Heart right ventricle (tissue), 16 donors: ENCODE measurements at regions of chr11 and their contacts with region 1.

Region 1: DNA sequence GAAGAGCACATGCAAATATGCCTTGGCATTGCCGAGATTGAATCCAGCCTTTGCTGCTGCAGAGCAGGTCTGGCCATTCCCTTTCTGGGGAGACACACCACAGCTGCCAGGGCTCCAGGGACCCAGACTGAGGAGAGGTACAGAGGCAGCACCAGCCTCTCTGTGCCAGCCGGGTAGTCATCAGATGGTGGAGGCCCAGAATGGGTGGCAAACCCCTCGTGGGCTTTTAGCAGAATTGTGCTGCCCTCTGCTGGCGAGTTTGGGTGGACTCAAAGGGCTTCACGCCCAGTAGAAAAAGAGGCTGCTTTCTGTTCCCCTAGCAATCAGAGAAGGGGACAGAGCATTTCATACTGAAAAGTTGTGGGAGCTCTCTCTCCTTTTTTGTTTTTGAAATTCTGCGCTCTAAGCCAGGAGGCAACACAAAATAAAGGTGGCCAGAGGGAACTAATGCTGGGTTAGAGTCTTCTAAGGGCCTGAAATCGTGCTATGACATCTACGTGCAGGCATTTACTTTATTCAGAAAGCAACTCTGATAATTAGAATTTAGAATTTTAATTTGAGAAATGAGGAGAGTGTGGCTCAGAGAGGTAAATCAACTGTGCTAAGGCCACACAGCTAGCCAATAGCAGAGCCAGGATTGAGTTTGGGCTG is 158.8 kb upstream of the NAV2 start:
- DNase-seq: peak; percentile 78 to 81
- ATAC-seq: peak; percentile 55 to 86 (median 82)
- H3K4me3 ChIP-seq: no peak overlapping the region
- H3K27ac ChIP-seq: no peak overlapping the region
- H3K4me1 ChIP-seq: peaks cover 0 to 14% (median 0%) of the 10 kb centered on the region in 9 donors
- H3K27me3 ChIP-seq: no peaks in the 10 kb centered on the region
- CTCF ChIP-seq: peak; percentile 71 to 95 (median 92)

Region 2: GRCh38 chr11:19071255-19071654 is 482.6 kb before region 1 on chr11:
- intact Hi-C with region 1: loop called (anchors 1 to 5 kb)
- DNase-seq: peak; percentile 57 to 59
- ATAC-seq: peak; percentile 76 to 95 (median 88)
- H3K4me3 ChIP-seq: peak overlapping the region in 3 of 10 donors; percentile 13 to 29 (median 22)
- H3K27ac ChIP-seq: no peak overlapping the region
- H3K4me1 ChIP-seq: peaks cover 0 to 3% (median 0%) of the 10 kb centered on the region in 9 donors
- H3K27me3 ChIP-seq: peaks cover 0 to 17% (median 0%) of the 10 kb centered on the region in 7 donors
- CTCF ChIP-seq: peak; percentile 74 to 96 (median 90)

Region 3: GRCh38 chr11:19259487-19260345 is 294.1 kb before region 1 on chr11:
- intact Hi-C with region 1: loop called in 9 of 10 experiments (anchors 2 to 10 kb)
- DNase-seq: peak; percentile 57 to 70
- ATAC-seq: peak in 7 of 8 donors; percentile 38 to 76 (median 71)
- H3K4me3 ChIP-seq: peak overlapping the region in 4 of 10 donors; percentile 10 to 34 (median 22)
- H3K27ac ChIP-seq: no peak overlapping the region
- H3K4me1 ChIP-seq: peaks cover 0 to 3% (median 0%) of the 10 kb centered on the region in 9 donors
- H3K27me3 ChIP-seq: no peaks in the 10 kb centered on the region
- CTCF ChIP-seq: peak; percentile 82 to 98 (median 94)

Region 4: GRCh38 chr11:19326499-19326898 is 227.3 kb before region 1 on chr11:
- intact Hi-C with region 1: loop called in 3 of 10 experiments (anchors 5 kb)
- DNase-seq: no peak
- ATAC-seq: peak in 1 of 8 donors; percentile 19
- H3K4me3 ChIP-seq: no peak overlapping the region
- H3K27ac ChIP-seq: no peak overlapping the region
- H3K4me1 ChIP-seq: no peaks in the 10 kb centered on the region
- H3K27me3 ChIP-seq: peaks cover 0 to 6% (median 3%) of the 10 kb centered on the region in 7 donors
- CTCF ChIP-seq: peak in 7 of 9 donors; percentile 21 to 41 (median 32)

Region 5: DNA sequence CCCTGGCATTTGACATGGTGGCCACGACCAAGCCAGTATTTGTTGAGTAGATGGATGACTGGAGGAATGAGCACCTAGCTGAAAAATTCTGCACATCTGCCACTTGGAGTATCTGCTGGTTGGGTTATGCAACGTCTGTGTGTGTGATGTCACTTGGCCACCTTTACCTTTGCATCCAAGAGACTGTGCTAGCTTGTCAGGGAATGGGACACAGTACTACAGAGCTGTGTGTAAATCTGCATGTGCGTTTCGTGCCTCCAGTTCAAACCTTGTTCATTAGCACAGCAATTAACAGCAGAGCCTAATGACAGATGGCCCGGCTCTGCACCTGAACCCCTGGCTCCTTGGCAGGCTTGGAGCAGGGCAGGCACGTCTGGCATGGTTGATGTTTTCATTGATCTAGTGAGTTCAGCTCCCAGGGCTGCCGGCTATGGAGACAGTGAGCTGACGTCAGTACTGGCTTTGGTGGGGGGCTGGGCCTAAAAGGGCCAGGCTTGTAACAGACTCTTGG is 29.6 kb before region 1 on chr11:
- intact Hi-C with region 1: no loop called
- DNase-seq: no peak
- ATAC-seq: peak in 1 of 8 donors; percentile 19
- H3K4me3 ChIP-seq: no peak overlapping the region
- H3K27ac ChIP-seq: no peak overlapping the region
- H3K4me1 ChIP-seq: peaks cover 0 to 4% (median 0%) of the 10 kb centered on the region in 9 donors
- H3K27me3 ChIP-seq: peaks cover 0 to 6% (median 0%) of the 10 kb centered on the region in 7 donors
- CTCF ChIP-seq: no peak

Region 6: DNA sequence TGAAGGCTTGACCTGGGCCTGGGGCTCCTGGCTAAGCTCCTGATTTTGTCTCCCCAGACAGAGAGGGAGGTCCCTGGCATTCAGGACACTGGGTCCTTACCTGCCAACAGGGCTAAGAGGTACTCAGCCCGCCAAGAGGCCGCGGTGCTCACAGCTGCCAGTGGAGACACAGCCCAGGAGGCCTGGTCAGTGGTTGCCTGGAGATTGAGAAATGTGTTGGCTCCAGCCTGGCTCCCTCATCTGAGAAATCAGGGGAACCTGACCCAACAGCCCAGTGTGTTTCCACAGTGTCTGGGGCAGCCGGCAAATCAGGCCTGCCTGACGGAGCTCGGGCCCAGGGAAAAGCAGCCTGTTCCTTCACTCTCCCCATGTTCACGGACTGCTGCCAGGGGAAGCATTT is 79.5 kb after region 1 on chr11:
- intact Hi-C with region 1: no loop called
- DNase-seq: peak in 1 of 2 donors; percentile 38
- ATAC-seq: peak; percentile 32 to 86 (median 66)
- H3K4me3 ChIP-seq: no peak overlapping the region
- H3K27ac ChIP-seq: peak overlapping the region in 1 of 10 donors; percentile 4
- H3K4me1 ChIP-seq: peaks cover 0 to 32% (median 17%) of the 10 kb centered on the region in 9 donors
- H3K27me3 ChIP-seq: no peaks in the 10 kb centered on the region
- CTCF ChIP-seq: no peak

Region 7: DNA sequence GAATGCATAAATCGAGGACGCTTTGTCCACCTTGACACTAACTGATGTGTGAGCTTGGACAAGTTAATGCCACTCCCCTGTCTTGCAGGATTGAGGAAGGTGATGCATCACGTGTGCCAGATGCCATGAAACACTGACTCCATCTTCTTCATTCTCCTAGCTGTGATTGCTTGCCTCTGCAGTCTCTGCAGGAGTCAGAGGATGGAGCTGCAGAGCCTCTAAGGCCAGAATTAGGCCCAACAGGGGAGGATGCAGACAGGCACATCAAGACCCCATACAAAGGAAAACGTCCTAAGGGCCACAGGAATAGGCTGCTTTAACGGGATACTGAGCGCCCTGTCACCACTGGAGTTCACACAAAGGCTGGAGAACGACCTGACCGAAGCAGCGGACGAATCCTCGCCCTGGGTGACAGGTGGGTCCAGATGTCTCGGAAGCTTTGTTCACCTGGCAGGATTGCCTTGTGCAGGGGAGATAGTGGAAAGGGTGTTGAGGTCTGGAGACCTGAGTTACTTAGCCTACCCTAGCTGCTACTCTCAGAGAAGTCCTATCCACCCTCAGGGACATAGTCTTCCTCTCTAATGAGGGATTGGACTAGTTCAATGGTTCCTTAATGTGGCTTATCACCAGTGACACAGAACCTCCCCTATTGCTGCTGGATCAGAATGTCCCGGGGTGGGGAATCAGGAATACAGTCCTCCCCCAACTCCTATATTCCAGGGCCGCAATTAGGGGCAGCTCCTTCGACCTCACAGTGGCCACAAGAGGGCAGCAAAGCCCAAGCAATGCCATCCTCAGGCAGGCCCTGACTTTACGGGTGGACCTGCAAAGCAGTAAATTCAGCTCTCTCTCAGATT is 574.1 kb after region 1 on chr11:
- intact Hi-C with region 1: loop called in 2 of 10 experiments (anchors 5 to 10 kb)
- DNase-seq: peak; percentile 71 to 76
- ATAC-seq: peak; percentile 69 to 85 (median 78)
- H3K4me3 ChIP-seq: no peak overlapping the region
- H3K27ac ChIP-seq: no peak overlapping the region
- H3K4me1 ChIP-seq: peaks cover 0 to 10% (median 7%) of the 10 kb centered on the region in 9 donors
- H3K27me3 ChIP-seq: peaks cover 0 to 17% (median 0%) of the 10 kb centered on the region in 7 donors
- CTCF ChIP-seq: peak; percentile 76 to 89 (median 84)